ENCODE measurements at regions of chr10 and their contacts with region 1.

Region 1: GRCh38 chr10:84537447-84537931 is 209.1 kb downstream of the CCSER2 start:
- DNase-seq: no peak
- H3K4me3 ChIP-seq: no peak overlapping the region
- H3K27ac ChIP-seq: no peak overlapping the region
- H3K4me1 ChIP-seq: peaks cover 2 to 8% (median 3%) of the 10 kb centered on the region in 4 experiments; a peak in 5 of 7 replicates
- H3K27me3 ChIP-seq: peaks cover 0 to 4% (median 0%) of the 10 kb centered on the region in 4 experiments; a peak in 3 of 7 replicates
- CTCF ChIP-seq: peak; percentile 12 to 81 (median 43)
- EP300 ChIP-seq: no peak
- POLR2A ChIP-seq: no peak
- RAD21 ChIP-seq: peak; percentile 92

Region 2: GRCh38 chr10:84194424-84195040 is 343.0 kb before region 1 on chr10 and contains the start of gene CDHR1:
- CTCF ChIA-PET with region 1: no interaction called
- POLR2A ChIA-PET with region 1: no interaction called
- DNase-seq: peak in 1 of 2 experiments; percentile 77
- H3K4me3 ChIP-seq: peak within 1 kb of the TSS; percentile 55 to 66 (median 63)
- H3K27ac ChIP-seq: no peak within 1 kb of the TSS
- H3K4me1 ChIP-seq: peaks cover 0 to 5% (median 2%) of the 10 kb centered on the region in 4 experiments; a peak in 4 of 7 replicates
- H3K27me3 ChIP-seq: peaks cover 2 to 36% (median 31%) of the 10 kb centered on the region in 4 experiments
- CTCF ChIP-seq: no peak
- EP300 ChIP-seq: no peak
- POLR2A ChIP-seq: no peak
- RAD21 ChIP-seq: no peak
- total RNA-seq, gene CDHR1: 8.7 and 10.5 TPM in 2 replicates

Region 3: DNA sequence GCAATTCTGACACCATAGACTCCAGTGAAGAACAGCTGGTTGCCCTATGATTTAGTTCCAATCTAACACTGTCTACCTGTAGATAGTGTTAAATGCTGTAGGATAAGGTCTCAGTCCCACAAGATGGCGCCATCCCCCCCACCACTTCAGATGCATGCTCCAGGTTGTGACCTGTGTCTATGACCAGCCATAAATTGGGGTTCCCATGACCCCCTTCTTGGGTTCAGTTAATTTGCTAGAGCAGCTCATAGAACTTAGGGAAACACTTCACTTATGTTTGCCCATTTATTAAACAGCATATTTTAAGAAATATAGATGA is 196.0 kb before region 1 on chr10:
- CTCF ChIA-PET with region 1: interaction called, 17 read pairs
- POLR2A ChIA-PET with region 1: no interaction called
- DNase-seq: no peak
- H3K4me3 ChIP-seq: no peak overlapping the region; a peak in 1 of 8 replicates
- H3K27ac ChIP-seq: no peak overlapping the region
- H3K4me1 ChIP-seq: peaks cover 0 to 13% (median 7%) of the 10 kb centered on the region in 4 experiments; a peak in 4 of 7 replicates
- H3K27me3 ChIP-seq: no peaks in the 10 kb centered on the region
- CTCF ChIP-seq: peak in 2 of 3 experiments; percentile 33 to 36; a peak in 3 of 4 replicates
- EP300 ChIP-seq: no peak
- POLR2A ChIP-seq: no peak
- RAD21 ChIP-seq: peak in 1 of 2 experiments; percentile 23; a peak in 1 of 4 replicates

Region 4: GRCh38 chr10:84375011-84375410 is 162.5 kb before region 1 on chr10:
- CTCF ChIA-PET with region 1: interaction called, 139 read pairs
- POLR2A ChIA-PET with region 1: no interaction called
- DNase-seq: no peak
- H3K4me3 ChIP-seq: no peak overlapping the region
- H3K27ac ChIP-seq: no peak overlapping the region
- H3K4me1 ChIP-seq: no peaks in the 10 kb centered on the region
- H3K27me3 ChIP-seq: no peaks in the 10 kb centered on the region
- CTCF ChIP-seq: peak in 2 of 3 experiments; percentile 56 to 68; a peak in 3 of 4 replicates
- EP300 ChIP-seq: no peak
- POLR2A ChIP-seq: no peak
- RAD21 ChIP-seq: peak; percentile 83 to 84

Region 5: DNA sequence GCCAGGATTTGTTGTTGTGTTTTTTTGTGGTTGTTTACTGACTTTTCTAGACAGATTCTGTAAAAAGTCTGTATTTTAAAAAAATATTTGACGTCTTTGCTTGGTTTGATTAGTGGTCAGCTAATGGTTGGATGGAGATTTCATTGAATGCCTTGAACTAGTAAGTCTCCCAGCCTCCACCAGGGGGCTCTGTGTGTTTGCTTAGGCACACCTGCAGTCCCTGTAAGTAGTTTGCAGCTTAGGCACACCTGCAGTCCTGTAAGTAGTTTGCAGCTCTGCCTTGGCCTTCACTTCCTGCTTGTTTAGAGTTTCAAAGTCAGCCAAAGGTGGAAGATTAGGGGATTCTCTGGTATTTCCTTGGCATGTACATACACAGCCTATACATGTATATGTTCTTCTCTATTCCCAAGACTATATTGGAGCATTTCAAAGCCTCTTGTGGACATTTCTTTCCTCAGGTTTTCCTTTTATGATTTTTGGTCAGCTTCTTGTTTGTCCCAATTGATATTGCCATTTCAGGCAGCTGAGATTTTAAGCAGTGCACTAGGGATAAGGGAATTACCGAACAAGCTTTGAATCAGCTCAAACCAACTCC is 107.5 kb before region 1 on chr10:
- CTCF ChIA-PET with region 1: interaction called, 70 read pairs
- POLR2A ChIA-PET with region 1: no interaction called
- DNase-seq: peak; percentile 60 to 87
- H3K4me3 ChIP-seq: no peak overlapping the region
- H3K27ac ChIP-seq: no peak overlapping the region
- H3K4me1 ChIP-seq: no peaks in the 10 kb centered on the region
- H3K27me3 ChIP-seq: no peaks in the 10 kb centered on the region
- CTCF ChIP-seq: peak; percentile 66 to 93 (median 91)
- EP300 ChIP-seq: 0 out of 3 replicates have a peak, but pooled peaks of 1 of the 2 experiments have one; percentile 30
- POLR2A ChIP-seq: no peak
- RAD21 ChIP-seq: peak; percentile 82 to 86

Region 6: GRCh38 chr10:84548869-84549268 is 11.4 kb after region 1 on chr10:
- CTCF ChIA-PET with region 1: interaction called, 140 read pairs
- POLR2A ChIA-PET with region 1: no interaction called
- DNase-seq: peak in 1 of 2 experiments; percentile 63
- H3K4me3 ChIP-seq: no peak overlapping the region
- H3K27ac ChIP-seq: no peak overlapping the region
- H3K4me1 ChIP-seq: no peaks in the 10 kb centered on the region
- H3K27me3 ChIP-seq: no peaks in the 10 kb centered on the region
- CTCF ChIP-seq: peak; percentile 69 to 94 (median 86)
- EP300 ChIP-seq: no peak
- POLR2A ChIP-seq: no peak
- RAD21 ChIP-seq: peak; percentile 44 to 50

Region 7: GRCh38 chr10:84583501-84583900 is 46.0 kb after region 1 on chr10:
- CTCF ChIA-PET with region 1: interaction called, 43 read pairs
- POLR2A ChIA-PET with region 1: no interaction called
- DNase-seq: peak in 1 of 2 experiments; percentile 38
- H3K4me3 ChIP-seq: no peak overlapping the region
- H3K27ac ChIP-seq: no peak overlapping the region
- H3K4me1 ChIP-seq: peaks cover 0 to 14% (median 14%) of the 10 kb centered on the region in 4 experiments; a peak in 6 of 7 replicates
- H3K27me3 ChIP-seq: peaks cover 0 to 3% (median 0%) of the 10 kb centered on the region in 4 experiments; a peak in 1 of 7 replicates
- CTCF ChIP-seq: no peak
- EP300 ChIP-seq: no peak
- POLR2A ChIP-seq: no peak
- RAD21 ChIP-seq: no peak

Region 8: DNA sequence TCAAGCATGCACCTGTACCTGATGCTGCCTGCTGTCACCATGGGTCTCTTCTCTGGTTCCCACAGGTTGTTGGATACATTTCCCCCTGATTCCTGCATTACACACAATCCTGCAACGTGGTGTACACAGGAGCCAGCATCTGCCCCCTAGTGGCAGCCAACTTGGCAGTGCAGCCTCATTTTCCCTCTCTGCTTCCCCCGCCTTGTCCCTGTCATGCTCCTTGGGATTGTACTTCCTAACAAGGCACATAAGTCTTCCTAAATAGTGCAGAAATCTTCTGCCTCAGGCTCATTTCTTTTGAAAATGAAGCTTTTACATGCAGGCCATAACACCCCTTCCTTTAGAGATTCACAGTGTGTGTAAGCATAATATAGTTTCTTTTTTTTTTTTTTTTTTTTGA is 178.4 kb after region 1 on chr10:
- CTCF ChIA-PET with region 1: interaction called, 36 read pairs
- POLR2A ChIA-PET with region 1: no interaction called
- DNase-seq: peak; percentile 34 to 76
- H3K4me3 ChIP-seq: no peak overlapping the region
- H3K27ac ChIP-seq: no peak overlapping the region
- H3K4me1 ChIP-seq: no peaks in the 10 kb centered on the region
- H3K27me3 ChIP-seq: no peaks in the 10 kb centered on the region
- CTCF ChIP-seq: peak; percentile 93 to 100 (median 99)
- EP300 ChIP-seq: no peak
- POLR2A ChIP-seq: no peak
- RAD21 ChIP-seq: peak; percentile 77 to 78

Measured in H1 (cell line).